GM18951 (cell line): ENCODE measurements at regions of chr6 and their contacts with region 1.

Region 1: GRCh38 chr6:111478749-111479148 is 4.3 kb downstream of the REV3L start:
- POLR2A ChIP-seq: no peak

Region 2: DNA sequence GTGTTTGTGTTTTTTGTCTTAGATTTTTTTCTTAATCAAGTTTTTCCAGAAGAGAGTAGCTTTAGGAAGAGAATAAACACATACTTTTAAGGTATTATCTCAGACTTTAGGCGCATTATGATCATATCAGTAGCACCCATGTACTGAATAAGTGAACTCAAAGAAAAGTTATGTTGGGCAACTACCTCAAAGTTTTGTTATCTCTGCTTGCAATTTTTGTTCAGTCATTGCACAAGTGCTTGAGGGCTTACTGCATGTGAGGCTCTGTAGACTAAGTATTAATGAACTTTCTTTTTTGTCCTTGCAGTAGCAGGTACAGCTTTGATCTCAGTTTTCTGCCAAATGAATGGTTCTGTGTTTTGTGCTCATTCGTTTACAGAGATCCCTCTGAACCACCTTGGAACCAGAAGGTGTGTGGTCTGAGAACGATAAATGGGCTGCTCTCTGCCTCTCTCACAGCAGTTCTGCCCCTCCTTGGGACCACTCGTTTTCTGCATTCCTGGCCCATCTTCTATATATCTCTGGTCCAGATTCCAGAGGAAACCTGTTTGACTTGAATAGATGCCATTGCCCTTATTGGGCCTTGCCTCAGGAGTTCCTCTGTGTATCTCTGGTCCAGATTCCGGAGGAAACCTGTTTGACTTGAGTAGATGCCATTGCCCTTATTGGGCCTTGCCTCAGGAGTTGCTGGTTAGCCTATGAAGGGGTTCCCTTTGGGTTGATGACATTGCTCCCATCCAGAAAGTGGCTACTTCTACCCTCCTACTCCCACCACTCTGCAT is 202.2 kb before region 1 on chr6:
- in situ Hi-C with region 1: loop called (anchors 10 kb)
- POLR2A ChIP-seq: no peak